Panc1 (cell line): ENCODE measurements at regions of chr1 and their contacts with region 1.

Region 1: DNA sequence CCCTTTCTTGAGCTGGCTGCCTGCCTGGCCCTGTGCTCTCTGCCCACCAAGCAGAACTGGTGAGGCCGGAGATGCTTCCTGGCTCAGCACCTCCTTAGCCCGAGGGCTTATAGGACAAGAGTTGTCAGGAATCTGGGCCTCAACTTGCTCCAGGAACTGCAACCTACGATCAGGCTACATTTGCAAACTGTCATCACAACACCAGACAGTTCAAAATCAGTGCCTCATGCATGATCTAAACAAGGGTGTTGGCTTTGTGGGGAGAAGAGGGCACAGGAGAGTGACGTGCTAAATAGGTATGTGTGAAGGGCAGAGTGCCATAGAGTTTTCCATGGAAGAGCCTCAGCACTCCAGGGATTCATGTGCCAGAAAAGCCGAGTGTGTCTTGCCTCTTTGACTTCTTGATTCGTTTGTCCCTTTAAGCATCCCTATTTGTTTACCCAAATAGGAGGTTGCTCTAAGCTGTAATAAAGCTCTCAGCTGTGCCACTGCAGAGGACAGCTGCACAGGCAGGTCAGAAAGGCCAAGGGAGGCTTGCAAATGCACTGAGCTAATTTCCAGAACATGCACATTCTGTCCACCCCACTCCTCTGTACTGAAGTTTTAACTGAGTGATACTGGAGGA is 30.2 kb upstream of the NEK2 start:
- DNase-seq: no peak
- ATAC-seq: peak; percentile 83
- H3K4me3 ChIP-seq: no peak overlapping the region
- H3K27ac ChIP-seq: peak overlapping the region; percentile 61
- H3K4me1 ChIP-seq: peaks cover 33% of the 10 kb centered on the region
- H3K27me3 ChIP-seq: no peaks in the 10 kb centered on the region
- CTCF ChIP-seq: no peak

Region 2: GRCh38 chr1:211735208-211736170 is 29.9 kb after region 1 on chr1:
- CTCF ChIA-PET with region 1: interaction called, 17 read pairs
- POLR2A ChIA-PET with region 1: no interaction called
- in situ Hi-C with region 1: no loop called
- intact Hi-C with region 1: no loop called
- DNase-seq: peak; percentile 83
- ATAC-seq: peak; percentile 91
- H3K4me3 ChIP-seq: peak overlapping the region; percentile 11 to 37; a peak in 3 of 4 replicates
- H3K27ac ChIP-seq: peak overlapping the region; percentile 99
- H3K4me1 ChIP-seq: peaks cover 71% of the 10 kb centered on the region
- H3K27me3 ChIP-seq: no peaks in the 10 kb centered on the region
- CTCF ChIP-seq: no peak

Region 3: GRCh38 chr1:211830330-211831142 is 125.0 kb after region 1 on chr1 and contains the start of gene LPGAT1:
- CTCF ChIA-PET with region 1: no interaction called
- POLR2A ChIA-PET with region 1: no interaction called
- in situ Hi-C with region 1: no loop called
- intact Hi-C with region 1: no loop called
- DNase-seq: no peak
- ATAC-seq: peak; percentile 96
- H3K4me3 ChIP-seq: peak within 1 kb of the TSS; percentile 63 to 87
- H3K27ac ChIP-seq: peak within 1 kb of the TSS; percentile 92
- H3K4me1 ChIP-seq: peaks cover 30% of the 10 kb centered on the region
- H3K27me3 ChIP-seq: no peaks in the 10 kb centered on the region
- CTCF ChIP-seq: peak; percentile 91
- total RNA-seq, gene LPGAT1: 85.4 TPM